HEK293 (cell line): ENCODE measurements at regions of chr2 and their contacts with region 1.

Region 1: GRCh38 chr2:237744613-237745249 is 53.8 kb upstream of the RBM44 start:
- H3K4me3 ChIP-seq: no peak overlapping the region
- H3K27ac ChIP-seq: no peak overlapping the region
- H3K4me1 ChIP-seq: peaks cover 6% of the 10 kb centered on the region; the same call in 1 of the 2 replicates
- CTCF ChIP-seq: peak; percentile 83

Region 2: DNA sequence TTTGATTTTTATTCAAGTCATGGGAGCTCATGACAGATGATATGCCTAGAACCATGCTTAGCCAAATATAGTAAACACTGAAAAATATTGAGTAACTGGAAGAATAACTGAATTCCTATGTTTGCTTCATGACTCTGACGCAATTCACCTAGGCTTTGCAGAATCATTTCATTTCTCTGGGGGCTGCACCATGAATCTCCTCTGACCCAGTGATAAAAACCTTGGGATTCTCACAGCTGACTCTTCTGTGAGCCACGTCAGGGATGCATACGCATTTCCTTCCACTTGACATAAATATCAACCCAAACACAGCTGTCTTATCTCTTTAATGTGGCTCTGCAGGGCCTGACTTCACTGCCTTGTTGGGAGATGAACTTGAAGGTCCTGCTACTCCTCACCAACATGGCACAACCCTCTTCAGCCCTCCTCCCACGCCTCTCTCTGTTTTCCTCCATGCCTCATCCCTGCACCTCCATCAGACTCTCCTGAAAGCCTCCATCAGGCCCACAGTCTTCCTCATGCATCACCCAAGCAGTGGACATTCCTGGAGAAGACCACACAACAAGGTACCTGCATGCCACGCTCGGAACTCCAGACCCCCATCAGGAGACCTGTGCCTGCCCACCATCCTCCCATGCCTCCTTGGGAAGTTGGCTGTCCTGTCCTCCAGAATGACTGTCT is 360.6 kb before region 1 on chr2:
- CTCF ChIA-PET with region 1: no interaction called
- POLR2A ChIA-PET with region 1: no interaction called
- H3K4me3 ChIP-seq: no peak overlapping the region
- H3K27ac ChIP-seq: no peak overlapping the region
- H3K4me1 ChIP-seq: no peaks in the 10 kb centered on the region
- CTCF ChIP-seq: no peak

Region 3: GRCh38 chr2:237581751-237582746 is 162.7 kb before region 1 on chr2:
- CTCF ChIA-PET with region 1: interaction called, 17 read pairs
- POLR2A ChIA-PET with region 1: no interaction called
- H3K4me3 ChIP-seq: no peak overlapping the region
- H3K27ac ChIP-seq: no peak overlapping the region
- H3K4me1 ChIP-seq: no peaks in the 10 kb centered on the region
- CTCF ChIP-seq: peak; percentile 82

Region 4: GRCh38 chr2:237691908-237692600 is 52.7 kb before region 1 on chr2:
- CTCF ChIA-PET with region 1: interaction called, 12 read pairs
- POLR2A ChIA-PET with region 1: no interaction called
- H3K4me3 ChIP-seq: peak overlapping the region; percentile 78
- H3K27ac ChIP-seq: peak overlapping the region; percentile 74
- H3K4me1 ChIP-seq: peaks cover 31% of the 10 kb centered on the region
- CTCF ChIP-seq: no peak

Region 5: GRCh38 chr2:237731663-237732062 is 13.1 kb before region 1 on chr2:
- CTCF ChIA-PET with region 1: interaction called, 35 read pairs
- POLR2A ChIA-PET with region 1: no interaction called
- H3K4me3 ChIP-seq: no peak overlapping the region
- H3K27ac ChIP-seq: no peak overlapping the region
- H3K4me1 ChIP-seq: peaks cover 29% of the 10 kb centered on the region
- CTCF ChIP-seq: no peak

Region 6: GRCh38 chr2:238596571-238597551 is 852.1 kb after region 1 on chr2:
- CTCF ChIA-PET with region 1: no interaction called
- POLR2A ChIA-PET with region 1: no interaction called
- H3K4me3 ChIP-seq: no peak overlapping the region
- H3K27ac ChIP-seq: no peak overlapping the region
- H3K4me1 ChIP-seq: no peaks in the 10 kb centered on the region
- CTCF ChIP-seq: no peak